ENCODE measurements at regions of chr4 and their contacts with region 1.

Region 1: DNA sequence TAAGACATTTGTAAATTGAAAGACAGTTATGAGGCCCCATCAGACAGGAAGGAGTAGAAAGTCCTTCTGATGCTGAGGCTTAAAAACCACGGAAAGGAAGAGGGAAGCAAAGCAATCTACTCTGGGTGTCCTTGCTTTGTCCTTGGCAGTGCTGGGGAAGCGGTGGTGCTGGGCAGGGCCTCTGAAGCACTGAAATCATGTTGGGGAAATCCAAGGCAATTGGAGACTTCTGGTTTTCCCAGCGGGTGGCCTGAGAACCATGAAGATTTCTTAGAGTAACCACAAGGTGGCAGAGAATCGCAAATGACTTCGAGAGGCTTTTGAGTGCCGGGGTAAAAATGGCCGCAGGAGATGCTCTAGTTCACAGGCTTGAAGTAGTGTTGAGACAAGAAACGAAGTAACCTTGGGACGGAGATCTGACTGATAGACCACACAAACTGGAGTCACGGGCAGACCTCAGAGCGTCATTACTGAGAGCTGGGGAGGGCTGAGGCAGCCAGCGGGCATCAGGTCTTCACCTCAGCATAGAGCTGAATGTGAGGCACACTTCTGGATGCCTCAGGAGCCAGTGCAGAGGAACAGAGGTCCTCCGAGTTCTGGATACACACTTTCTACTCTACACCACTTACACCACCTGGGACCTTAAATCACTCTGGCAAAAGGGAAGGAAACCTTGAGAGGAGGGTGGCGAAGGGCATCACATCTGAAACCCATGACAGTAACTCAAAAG is 130.7 kb upstream of the GPRIN3 start:
- DNase-seq: peak; percentile 66
- H3K4me3 ChIP-seq: no peak overlapping the region
- H3K27ac ChIP-seq: no peak overlapping the region
- H3K4me1 ChIP-seq: no peaks in the 10 kb centered on the region
- H3K27me3 ChIP-seq: no peaks in the 10 kb centered on the region
- CTCF ChIP-seq: peak in 2 of 3 experiments; percentile 23 to 25
- POLR2A ChIP-seq: no peak

Region 2: GRCh38 chr4:89226665-89227574 is 211.3 kb before region 1 on chr4:
- intact Hi-C with region 1: loop called (anchors 5 kb)
- DNase-seq: peak; percentile 92
- H3K4me3 ChIP-seq: no peak overlapping the region
- H3K27ac ChIP-seq: no peak overlapping the region
- H3K4me1 ChIP-seq: no peaks in the 10 kb centered on the region
- H3K27me3 ChIP-seq: no peaks in the 10 kb centered on the region
- CTCF ChIP-seq: peak; percentile 58 to 61 (median 59)
- POLR2A ChIP-seq: no peak

Region 3: GRCh38 chr4:89708903-89709421 is 270.7 kb after region 1 on chr4:
- intact Hi-C with region 1: no loop called
- DNase-seq: no peak
- H3K4me3 ChIP-seq: no peak overlapping the region
- H3K27ac ChIP-seq: no peak overlapping the region
- H3K4me1 ChIP-seq: no peaks in the 10 kb centered on the region
- H3K27me3 ChIP-seq: no peaks in the 10 kb centered on the region
- CTCF ChIP-seq: no peak
- POLR2A ChIP-seq: no peak

Measured in testis (tissue), 5 donors.